ENCODE measurements at regions of chr14 and their contacts with region 1.

Region 1: GRCh38 chr14:52069304-52070050 is 618 bp upstream of the NID2 start:
- DNase-seq: no peak
- H3K4me3 ChIP-seq: no peak overlapping the region
- H3K27ac ChIP-seq: no peak overlapping the region
- H3K4me1 ChIP-seq: no peaks in the 10 kb centered on the region
- H3K27me3 ChIP-seq: no peaks in the 10 kb centered on the region
- CTCF ChIP-seq: no peak

Region 2: DNA sequence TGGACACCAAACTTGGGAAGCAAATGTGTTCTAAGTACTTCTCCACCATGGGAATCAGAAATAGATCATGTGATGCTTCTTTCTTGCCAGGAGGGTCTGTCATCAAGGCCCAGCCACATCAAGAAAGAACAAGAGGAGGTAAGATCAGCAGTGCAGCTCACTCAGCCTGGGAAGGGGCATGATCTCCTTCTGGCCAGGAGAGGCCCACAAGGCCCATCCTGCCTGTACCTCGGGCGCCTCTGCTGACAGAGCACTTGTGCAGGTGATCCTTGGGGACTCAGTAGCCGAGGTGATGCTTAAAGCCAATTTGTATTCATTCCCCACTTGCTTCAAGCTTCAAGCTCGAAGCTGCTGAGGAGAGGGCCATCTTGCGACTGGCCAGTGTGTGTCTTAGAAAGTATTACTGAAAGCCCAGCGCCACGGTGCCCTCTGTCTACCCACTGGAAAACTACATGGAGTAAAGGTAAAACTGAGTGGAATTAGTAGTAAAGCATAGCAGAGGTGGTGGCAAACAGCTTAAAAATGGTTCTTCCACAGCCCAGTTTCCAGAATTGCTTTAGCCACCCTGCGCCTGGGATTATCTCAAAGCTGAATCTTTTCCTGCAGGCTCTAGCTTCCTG is 54.0 kb before region 1 on chr14:
- CTCF ChIA-PET with region 1: no interaction called
- POLR2A ChIA-PET with region 1: no interaction called
- intact Hi-C with region 1: loop called (anchors 10 kb)
- DNase-seq: no peak
- H3K4me3 ChIP-seq: no peak overlapping the region
- H3K27ac ChIP-seq: no peak overlapping the region
- H3K4me1 ChIP-seq: no peaks in the 10 kb centered on the region
- H3K27me3 ChIP-seq: no peaks in the 10 kb centered on the region
- CTCF ChIP-seq: peak; percentile 39; the same call in 1 of the 2 replicates

Region 3: GRCh38 chr14:52124791-52125661 is 55.5 kb after region 1 on chr14:
- CTCF ChIA-PET with region 1: no interaction called
- POLR2A ChIA-PET with region 1: no interaction called
- intact Hi-C with region 1: no loop called
- DNase-seq: peak; percentile 63 to 72
- H3K4me3 ChIP-seq: peak overlapping the region; percentile 9; the same call in 1 of the 2 replicates
- H3K27ac ChIP-seq: peak overlapping the region; percentile 67
- H3K4me1 ChIP-seq: peaks cover 21% of the 10 kb centered on the region
- H3K27me3 ChIP-seq: no peaks in the 10 kb centered on the region
- CTCF ChIP-seq: no peak

Measured in PC-9 (cell line).